ENCODE measurements at regions of chr14 and their contacts with region 1.

Region 1: DNA sequence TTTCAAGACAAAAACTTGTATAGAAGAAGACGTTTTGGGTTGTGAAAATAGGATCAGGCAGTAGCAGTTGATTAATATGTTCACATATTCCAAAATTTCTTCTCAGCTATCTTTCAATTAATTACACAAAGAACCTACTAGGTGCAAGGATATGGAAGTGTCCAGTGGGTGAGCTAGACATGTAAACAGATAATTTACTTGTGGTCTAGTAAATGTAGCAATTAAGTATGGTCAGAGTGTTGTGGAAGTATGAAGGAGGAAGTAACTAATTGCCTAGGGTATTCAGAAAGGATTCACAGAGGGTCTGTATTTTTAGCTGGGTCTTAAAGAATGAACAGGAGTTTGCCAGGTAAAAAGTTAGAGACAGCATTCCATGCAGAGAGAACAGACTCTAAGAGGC is 5.9 kb downstream of the GOLGA5 start:
- DNase-seq: no peak
- ATAC-seq: no peak
- H3K4me3 Mint-ChIP-seq: no peak overlapping the region
- H3K27ac Mint-ChIP-seq: peak overlapping the region; percentile 47
- H3K4me1 Mint-ChIP-seq: peaks cover 64% of the 10 kb centered on the region
- H3K27me3 Mint-ChIP-seq: no peaks in the 10 kb centered on the region
- CTCF ChIP-seq: no peak

Region 2: GRCh38 chr14:92670160-92670559 is 129.9 kb before region 1 on chr14:
- CTCF ChIA-PET with region 1: no interaction called
- POLR2A ChIA-PET with region 1: no interaction called
- intact Hi-C with region 1: no loop called
- DNase-seq: no peak
- ATAC-seq: no peak
- H3K4me3 Mint-ChIP-seq: no peak overlapping the region
- H3K27ac Mint-ChIP-seq: peak overlapping the region; percentile 89
- H3K4me1 Mint-ChIP-seq: peaks cover 84% of the 10 kb centered on the region
- H3K27me3 Mint-ChIP-seq: no peaks in the 10 kb centered on the region
- CTCF ChIP-seq: no peak

Region 3: GRCh38 chr14:92813201-92813600 is 13.2 kb after region 1 on chr14:
- CTCF ChIA-PET with region 1: interaction called, 12 read pairs
- POLR2A ChIA-PET with region 1: interaction called, 3 read pairs
- intact Hi-C with region 1: no loop called
- DNase-seq: no peak
- ATAC-seq: no peak
- H3K4me3 Mint-ChIP-seq: no peak overlapping the region
- H3K27ac Mint-ChIP-seq: no peak overlapping the region
- H3K4me1 Mint-ChIP-seq: no peaks in the 10 kb centered on the region
- H3K27me3 Mint-ChIP-seq: no peaks in the 10 kb centered on the region
- CTCF ChIP-seq: no peak

Measured in activated CD8-positive, alpha-beta T cell treated with anti-CD3 and anti-CD28 coated beads for 36 hours (primary cell).